ENCODE measurements at regions of chr7 and their contacts with region 1.

Region 1: DNA sequence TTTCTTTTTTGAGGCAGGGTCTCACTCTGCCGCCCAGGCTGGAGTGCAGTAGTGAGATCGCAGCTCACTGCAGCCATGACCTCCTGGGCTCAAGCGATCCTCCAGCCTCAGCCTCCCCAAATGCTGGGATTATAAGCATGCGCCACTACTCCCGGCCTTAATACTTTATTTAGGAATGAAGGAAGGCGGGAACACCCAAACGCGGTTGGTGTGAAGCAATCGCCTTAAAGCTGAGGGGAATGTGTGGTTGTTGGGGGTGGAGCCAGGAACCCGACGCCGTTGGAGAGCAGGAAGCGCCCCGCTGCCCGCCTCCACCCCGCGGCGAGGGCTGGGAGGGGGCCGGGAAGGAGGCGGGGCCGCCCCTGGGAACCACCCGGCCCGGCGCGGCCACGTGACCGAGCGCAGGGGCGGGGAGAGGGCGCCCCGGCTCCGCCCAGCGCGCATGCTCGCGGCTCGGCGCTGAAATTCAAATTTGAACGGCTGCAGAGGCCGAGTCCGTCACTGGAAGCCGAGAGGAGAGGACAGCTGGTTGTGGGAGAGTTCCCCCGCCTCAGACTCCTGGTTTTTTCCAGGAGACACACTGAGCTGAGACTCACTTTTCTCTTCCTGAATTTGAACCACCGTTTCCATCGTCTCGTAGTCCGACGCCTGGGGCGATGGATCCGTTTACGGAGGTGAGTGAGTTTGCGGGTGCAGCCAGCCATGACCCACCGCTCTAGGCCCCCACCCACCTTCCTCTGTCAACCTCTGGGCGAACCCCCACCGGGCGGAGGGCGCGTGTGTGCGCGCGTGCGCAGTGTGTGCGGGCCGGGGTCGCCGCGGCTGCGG is at the start of gene ANLN:
- DNase-seq: peak; percentile 94
- ATAC-seq: peak; percentile 68
- H3K4me3 ChIP-seq: peak within 1 kb of the TSS; percentile 90
- H3K27ac ChIP-seq: peak within 1 kb of the TSS; percentile 96
- H3K4me1 ChIP-seq: peaks cover 35% of the 10 kb centered on the region
- H3K27me3 ChIP-seq: no peaks in the 10 kb centered on the region
- CTCF ChIP-seq: no peak
- total RNA-seq, gene ANLN: 110 and 111 TPM in 2 replicates

Region 2: GRCh38 chr7:36366718-36367560 is 22.6 kb before region 1 on chr7:
- CTCF ChIA-PET with region 1: no interaction called
- POLR2A ChIA-PET with region 1: interaction called, 5 read pairs
- intact Hi-C with region 1: loop called (anchors 1 kb)
- DNase-seq: peak; percentile 92
- ATAC-seq: peak; percentile 92
- H3K4me3 ChIP-seq: peak overlapping the region; percentile 79
- H3K27ac ChIP-seq: no peak overlapping the region
- H3K4me1 ChIP-seq: 0 out of 2 replicates have a peak, but pooled peaks cover 4% of the 10 kb centered on the region
- H3K27me3 ChIP-seq: no peaks in the 10 kb centered on the region
- CTCF ChIP-seq: peak; percentile 75

Region 3: DNA sequence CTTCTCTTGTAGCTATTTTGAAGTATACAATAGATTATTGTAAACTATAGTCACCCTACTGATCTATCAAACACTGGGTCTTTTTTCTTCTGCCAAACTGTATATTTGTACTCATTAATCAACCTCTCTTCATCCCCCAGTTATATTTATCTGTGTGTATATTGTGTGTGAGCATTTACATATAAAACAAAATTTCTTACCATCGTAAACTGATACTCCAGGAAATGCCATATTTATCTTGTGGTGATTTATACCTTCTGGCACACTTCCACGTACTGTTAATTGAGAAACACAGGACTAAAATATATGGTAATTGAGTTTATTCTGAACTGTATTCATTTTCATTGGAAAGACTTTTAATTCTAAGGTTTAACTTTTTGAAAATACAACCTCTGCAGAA is 19.0 kb after region 1 on chr7:
- CTCF ChIA-PET with region 1: no interaction called
- POLR2A ChIA-PET with region 1: interaction called, 10 read pairs
- intact Hi-C with region 1: loop called (anchors 2 kb)
- DNase-seq: peak; percentile 36
- ATAC-seq: peak; percentile 71
- H3K4me3 ChIP-seq: no peak overlapping the region
- H3K27ac ChIP-seq: no peak overlapping the region
- H3K4me1 ChIP-seq: peaks cover 16% of the 10 kb centered on the region; the same call in 1 of the 2 replicates
- H3K27me3 ChIP-seq: no peaks in the 10 kb centered on the region
- CTCF ChIP-seq: no peak

Measured in PC-3 (cell line).